IMR-90 (cell line): ENCODE measurements at regions of chr2 and their contacts with region 1.

Region 1: DNA sequence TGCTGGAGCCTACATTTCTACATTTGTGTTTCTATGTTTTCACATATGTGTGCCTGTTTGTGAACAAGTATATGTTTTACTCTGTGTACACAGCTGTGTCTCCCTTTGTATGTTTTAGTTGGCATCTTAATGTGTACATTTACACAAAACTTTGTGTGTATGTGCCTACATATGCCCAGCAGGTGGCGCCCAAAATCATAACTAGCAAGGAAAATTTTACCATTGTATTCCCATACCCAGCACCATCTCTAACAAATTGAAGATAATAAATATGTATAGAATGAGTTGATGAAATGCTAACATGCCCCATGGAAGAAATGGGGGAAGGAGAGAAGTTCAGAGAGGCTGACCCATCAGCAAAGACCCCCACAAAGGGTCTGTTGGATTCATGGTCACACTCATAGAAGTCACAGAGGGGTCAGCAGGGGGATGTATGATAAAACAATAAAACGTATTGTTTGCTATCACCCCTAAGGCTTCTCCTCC is 48.1 kb downstream of the PKDCC start:
- DNase-seq: peak; percentile 83
- ATAC-seq: peak; percentile 65
- H3K4me3 ChIP-seq: no peak overlapping the region
- H3K27ac ChIP-seq: no peak overlapping the region
- H3K4me1 ChIP-seq: peaks cover 22% of the 10 kb centered on the region
- H3K27me3 ChIP-seq: no peaks in the 10 kb centered on the region
- CTCF ChIP-seq: peak; percentile 88
- POLR2A ChIP-seq: peak; percentile 27; the same call in 1 of the 2 replicates
- RAD21 ChIP-seq: peak; percentile 90

Region 2: DNA sequence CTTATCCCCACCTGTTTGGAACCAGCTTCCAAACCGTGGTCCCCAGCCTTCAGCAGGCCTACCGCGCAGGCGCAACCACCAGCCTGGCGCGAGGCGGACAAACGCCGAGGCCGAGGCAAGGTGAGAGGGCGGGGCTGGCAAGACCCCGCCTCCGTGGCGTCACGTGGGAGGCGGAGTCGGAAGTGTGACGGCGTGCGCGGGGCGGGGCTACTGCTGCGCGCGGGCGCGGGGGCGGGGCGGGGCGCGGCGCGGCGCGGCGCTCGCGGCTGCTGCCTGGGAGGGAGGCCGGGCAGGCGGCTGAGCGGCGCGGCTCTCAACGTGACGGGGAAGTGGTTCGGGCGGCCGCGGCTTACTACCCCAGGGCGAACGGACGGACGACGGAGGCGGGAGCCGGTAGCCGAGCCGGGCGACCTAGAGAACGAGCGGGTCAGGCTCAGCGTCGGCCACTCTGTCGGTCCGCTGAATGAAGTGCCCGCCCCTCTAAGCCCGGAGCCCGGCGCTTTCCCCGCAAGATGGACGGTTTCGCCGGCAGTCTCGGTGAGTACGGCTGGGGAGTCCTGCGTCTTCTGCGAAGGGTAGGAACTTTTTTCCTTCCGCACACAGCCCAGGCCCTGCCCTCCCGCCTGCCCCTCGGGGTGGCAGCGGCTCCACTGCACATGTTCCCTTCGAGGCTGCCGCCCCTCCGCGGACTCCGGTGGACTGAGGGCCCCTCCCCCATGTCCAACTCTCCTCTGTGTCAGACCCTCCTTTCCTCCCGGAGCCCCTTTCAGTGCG is 73.3 kb after region 1 on chr2 and contains the start of gene EML4:
- CTCF ChIA-PET with region 1: interaction called, 3 read pairs
- POLR2A ChIA-PET with region 1: no interaction called
- dilution Hi-C with region 1: no loop called
- in situ Hi-C with region 1: no loop called
- intact Hi-C with region 1: loop called (anchors 1 kb)
- DNase-seq: peak; percentile 90
- ATAC-seq: peak; percentile 93
- H3K4me3 ChIP-seq: peak within 1 kb of the TSS; percentile 92
- H3K27ac ChIP-seq: peak within 1 kb of the TSS; percentile 85
- H3K4me1 ChIP-seq: peaks cover 11% of the 10 kb centered on the region
- H3K27me3 ChIP-seq: no peaks in the 10 kb centered on the region
- CTCF ChIP-seq: no peak
- POLR2A ChIP-seq: peak; percentile 90
- RAD21 ChIP-seq: no peak
- total RNA-seq, gene EML4: 73.7 and 85.8 TPM in 2 replicates

Region 3: DNA sequence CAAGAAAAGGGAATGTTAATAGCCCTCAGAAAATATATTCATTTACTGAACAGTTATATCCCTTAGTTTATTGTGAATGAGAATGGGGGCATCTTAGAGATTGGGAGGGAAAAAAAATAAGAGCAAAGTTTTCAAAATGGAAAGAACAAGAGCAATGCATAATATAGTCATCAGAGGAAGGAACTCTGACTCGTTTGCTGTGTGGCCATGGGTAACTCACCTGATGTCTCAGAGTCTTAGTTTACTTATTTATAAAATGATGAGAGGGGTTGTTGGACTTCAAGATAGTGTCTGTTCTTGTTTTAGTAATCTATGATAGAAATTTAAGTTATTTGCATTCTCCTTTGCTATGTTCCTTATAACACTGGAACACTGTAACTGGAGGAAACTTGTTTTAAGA is 143.8 kb after region 1 on chr2:
- CTCF ChIA-PET with region 1: interaction called, 4 read pairs
- POLR2A ChIA-PET with region 1: no interaction called
- dilution Hi-C with region 1: no loop called
- in situ Hi-C with region 1: no loop called
- intact Hi-C with region 1: loop called (anchors 2 kb)
- DNase-seq: no peak
- ATAC-seq: no peak
- H3K4me3 ChIP-seq: no peak overlapping the region
- H3K27ac ChIP-seq: no peak overlapping the region
- H3K4me1 ChIP-seq: peaks cover 2% of the 10 kb centered on the region
- H3K27me3 ChIP-seq: no peaks in the 10 kb centered on the region
- CTCF ChIP-seq: no peak
- POLR2A ChIP-seq: no peak
- RAD21 ChIP-seq: no peak

Region 4: DNA sequence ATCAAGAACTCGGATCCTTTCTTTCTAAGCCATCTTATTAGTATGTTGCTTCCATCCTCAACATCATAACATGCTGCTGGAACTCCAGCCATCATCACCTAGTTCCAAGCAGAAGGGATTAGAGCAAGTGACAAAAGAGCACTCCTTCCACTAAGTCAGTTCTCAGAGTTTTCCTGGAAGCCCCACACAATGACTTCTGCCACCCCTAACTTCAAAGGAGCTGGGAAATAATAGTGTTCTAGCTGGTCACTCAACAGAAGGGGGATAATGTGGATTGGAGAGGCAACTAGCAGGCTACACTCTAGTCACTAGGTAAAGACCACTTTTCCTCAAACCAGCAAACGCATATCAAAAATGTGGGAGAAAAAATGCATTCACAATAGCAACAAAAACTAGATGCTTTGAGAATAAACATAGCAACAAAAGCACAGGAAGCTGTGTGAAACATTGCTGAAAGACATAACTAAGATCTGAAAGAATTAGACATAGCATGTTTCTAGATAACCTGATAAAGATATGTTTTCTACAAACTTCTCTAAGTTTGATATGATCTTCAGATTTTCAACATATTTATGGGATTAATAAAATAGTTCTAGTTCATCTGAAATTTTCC is 225.6 kb after region 1 on chr2:
- CTCF ChIA-PET with region 1: no interaction called
- POLR2A ChIA-PET with region 1: no interaction called
- dilution Hi-C with region 1: no loop called
- in situ Hi-C with region 1: loop called (anchors 5 kb)
- intact Hi-C with region 1: no loop called
- DNase-seq: no peak
- ATAC-seq: no peak
- H3K4me3 ChIP-seq: no peak overlapping the region
- H3K27ac ChIP-seq: no peak overlapping the region
- H3K4me1 ChIP-seq: no peaks in the 10 kb centered on the region; the same call in 1 of the 2 replicates
- H3K27me3 ChIP-seq: no peaks in the 10 kb centered on the region
- CTCF ChIP-seq: no peak
- POLR2A ChIP-seq: no peak
- RAD21 ChIP-seq: no peak

Region 5: GRCh38 chr2:42360890-42361727 is 265.1 kb after region 1 on chr2 and contains the start of gene COX7A2L:
- CTCF ChIA-PET with region 1: no interaction called
- POLR2A ChIA-PET with region 1: no interaction called
- dilution Hi-C with region 1: no loop called
- in situ Hi-C with region 1: no loop called
- intact Hi-C with region 1: loop called (anchors 1 kb)
- DNase-seq: peak; percentile 97
- ATAC-seq: peak; percentile 99
- H3K4me3 ChIP-seq: peak within 1 kb of the TSS; percentile 86
- H3K27ac ChIP-seq: peak within 1 kb of the TSS; percentile 94
- H3K4me1 ChIP-seq: peaks cover 4% of the 10 kb centered on the region
- H3K27me3 ChIP-seq: peaks cover 4% of the 10 kb centered on the region
- CTCF ChIP-seq: peak; percentile 46
- POLR2A ChIP-seq: peak; percentile 92
- RAD21 ChIP-seq: peak; percentile 52
- total RNA-seq, gene COX7A2L: 123 and 192 TPM in 2 replicates

Region 6: DNA sequence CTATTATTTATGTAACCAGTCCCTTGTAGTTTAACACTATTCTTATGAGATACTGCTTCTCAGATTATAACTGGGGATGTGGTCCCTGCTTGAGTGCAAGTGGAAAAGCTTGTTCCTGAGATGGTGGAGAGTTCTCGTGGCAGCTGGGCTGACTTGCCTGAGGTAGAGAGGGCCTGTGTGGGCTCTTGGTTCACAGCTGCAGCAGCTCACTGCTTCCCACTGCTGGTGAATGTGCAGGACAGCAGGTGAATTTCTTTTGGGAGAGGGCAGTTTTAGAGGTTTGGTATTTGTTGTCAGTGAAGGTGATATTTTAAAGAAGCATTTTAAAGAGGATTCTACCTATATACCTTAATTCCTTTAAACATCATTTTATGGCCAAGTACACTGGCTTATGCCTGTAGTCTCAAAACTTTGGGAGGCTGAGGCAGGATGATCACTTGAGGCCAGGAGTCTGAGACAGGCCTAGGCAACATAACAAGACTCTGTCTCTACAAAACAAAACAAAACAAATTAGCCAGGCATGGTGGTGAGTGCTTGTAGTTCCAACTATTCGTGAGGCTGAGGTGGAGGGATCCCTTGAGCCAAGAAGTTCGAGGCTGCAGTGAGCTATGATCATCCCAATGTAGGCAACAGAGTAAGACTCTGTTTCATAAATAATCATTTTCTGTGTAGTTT is 567.3 kb after region 1 on chr2:
- CTCF ChIA-PET with region 1: no interaction called
- POLR2A ChIA-PET with region 1: no interaction called
- dilution Hi-C with region 1: no loop called
- in situ Hi-C with region 1: no loop called
- intact Hi-C with region 1: loop called (anchors 2 kb)
- DNase-seq: peak; percentile 77
- ATAC-seq: peak; percentile 98
- H3K4me3 ChIP-seq: no peak overlapping the region
- H3K27ac ChIP-seq: no peak overlapping the region
- H3K4me1 ChIP-seq: no peaks in the 10 kb centered on the region
- H3K27me3 ChIP-seq: no peaks in the 10 kb centered on the region
- CTCF ChIP-seq: peak; percentile 97
- POLR2A ChIP-seq: no peak
- RAD21 ChIP-seq: peak; percentile 96